GM12878 (cell line): ENCODE measurements at regions of chr2 and their contacts with region 1.

Region 1: GRCh38 chr2:219947575-219947974 is 320.1 kb downstream of the SLC4A3 start:
- DNase-seq: no peak
- ATAC-seq: no peak
- H3K4me3 ChIP-seq: no peak overlapping the region
- H3K27ac ChIP-seq: no peak overlapping the region
- H3K4me1 ChIP-seq: no peaks in the 10 kb centered on the region
- H3K27me3 ChIP-seq: no peaks in the 10 kb centered on the region
- CTCF ChIP-seq: no peak
- EP300 ChIP-seq: no peak
- POLR2A ChIP-seq: no peak
- RAD21 ChIP-seq: no peak

Region 2: DNA sequence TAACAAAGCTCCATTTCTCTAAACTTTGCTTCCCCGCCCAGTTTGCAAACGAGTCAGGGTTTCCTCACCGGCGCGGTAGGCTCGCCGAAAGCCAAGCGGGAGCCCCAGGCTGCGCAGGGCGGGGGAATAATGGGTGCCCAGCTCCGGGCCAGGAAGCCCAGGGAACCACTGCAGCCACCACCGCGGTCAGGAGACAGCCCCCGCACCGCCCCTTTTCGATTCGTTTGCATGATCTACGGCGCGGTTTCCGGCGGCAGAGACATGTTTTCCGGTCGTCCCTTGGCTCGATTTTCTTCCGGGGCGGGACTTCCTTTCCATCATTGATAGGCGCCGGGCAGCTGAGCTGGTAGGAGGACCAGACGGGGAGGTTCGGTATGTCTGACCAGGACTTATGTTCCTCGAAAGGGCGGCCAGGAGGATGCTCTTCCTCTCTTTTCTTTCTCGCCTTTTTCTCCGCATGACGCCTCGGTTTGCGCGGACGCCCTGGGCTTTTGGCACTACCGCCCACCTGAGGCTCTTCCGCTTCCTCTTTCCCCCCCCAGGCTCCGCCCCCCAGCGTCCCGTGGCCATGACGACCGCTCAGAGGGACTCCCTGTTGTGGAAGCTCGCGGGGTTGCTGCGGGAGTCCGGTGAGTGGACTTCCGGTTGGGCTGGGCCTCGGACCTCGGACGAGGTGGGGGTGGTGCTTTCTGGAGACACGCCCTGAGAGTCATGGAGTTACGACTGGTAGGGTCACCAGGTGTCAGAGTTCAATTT is 349.8 kb before region 1 on chr2 and contains the start of gene STK11IP:
- CTCF ChIA-PET with region 1: no interaction called
- POLR2A ChIA-PET with region 1: no interaction called
- RAD21 ChIA-PET with region 1: no interaction called
- SMC1A ChIA-PET with region 1: no interaction called
- in situ Hi-C with region 1: no loop called
- intact Hi-C with region 1: no loop called
- DNase-seq: peak; percentile 84
- ATAC-seq: peak; percentile 96
- H3K4me3 ChIP-seq: peak within 1 kb of the TSS; percentile 74
- H3K27ac ChIP-seq: peak within 1 kb of the TSS; percentile 81
- H3K4me1 ChIP-seq: 0 out of 2 replicates have a peak, but pooled peaks cover 8% of the 10 kb centered on the region
- H3K27me3 ChIP-seq: no peaks in the 10 kb centered on the region
- CTCF ChIP-seq: no peak
- EP300 ChIP-seq: no peak
- POLR2A ChIP-seq: peak; percentile 97
- RAD21 ChIP-seq: no peak
- polyA plus RNA-seq, gene STK11IP: 0.42 to 1.6 TPM

Region 3: GRCh38 chr2:219983836-219984235 is 36.3 kb after region 1 on chr2:
- CTCF ChIA-PET with region 1: no interaction called
- POLR2A ChIA-PET with region 1: no interaction called
- RAD21 ChIA-PET with region 1: no interaction called
- SMC1A ChIA-PET with region 1: interaction called, 3 read pairs
- in situ Hi-C with region 1: no loop called
- intact Hi-C with region 1: loop called (anchors 2 kb)
- DNase-seq: no peak
- ATAC-seq: no peak
- H3K4me3 ChIP-seq: no peak overlapping the region
- H3K27ac ChIP-seq: no peak overlapping the region
- H3K4me1 ChIP-seq: no peaks in the 10 kb centered on the region
- H3K27me3 ChIP-seq: no peaks in the 10 kb centered on the region
- CTCF ChIP-seq: no peak
- EP300 ChIP-seq: no peak
- POLR2A ChIP-seq: no peak
- RAD21 ChIP-seq: no peak